Naive thymus-derived CD4-positive, alpha-beta T cell (primary cell): ENCODE measurements at regions of chr7 and their contacts with region 1.

Region 1: GRCh38 chr7:77247206-77247850 is 47.7 kb upstream of the FGL2 start:
- DNase-seq: peak; percentile 65 to 82 (median 79)
- ATAC-seq: peak; percentile 99
- H3K4me3 ChIP-seq: no peak overlapping the region
- H3K4me3 Mint-ChIP-seq: no peak overlapping the region
- H3K27ac ChIP-seq: no peak overlapping the region
- H3K27ac Mint-ChIP-seq: no peak overlapping the region
- H3K4me1 ChIP-seq: no peaks in the 10 kb centered on the region
- H3K4me1 Mint-ChIP-seq: peaks cover 0 to 12% (median 3%) of the 10 kb centered on the region in 7 donors
- H3K27me3 ChIP-seq: no peaks in the 10 kb centered on the region
- H3K27me3 Mint-ChIP-seq: peaks cover 0 to 16% (median 0%) of the 10 kb centered on the region in 5 donors

Region 2: DNA sequence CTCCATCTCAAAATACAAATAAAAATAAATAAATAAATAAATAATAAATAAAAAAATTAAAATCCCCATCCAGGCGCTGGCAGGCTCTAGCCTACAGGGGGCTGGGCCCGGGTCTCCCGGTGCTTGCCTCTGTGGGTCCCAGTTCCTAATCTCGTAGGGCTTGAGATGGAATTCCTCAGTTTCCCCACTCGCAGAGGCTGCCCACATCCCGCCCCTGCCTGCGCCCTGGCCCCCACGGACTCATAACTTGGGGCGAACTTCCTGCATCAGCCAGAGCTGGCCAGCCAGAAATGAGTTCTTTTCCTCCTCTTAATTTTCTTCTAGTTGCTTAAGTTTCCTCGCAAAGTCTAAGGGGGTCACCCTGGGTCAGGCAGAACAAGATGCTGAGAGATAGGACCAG is 1067.6 kb before region 1 on chr7:
- CTCF ChIA-PET with region 1: no interaction called
- POLR2A ChIA-PET with region 1: no interaction called
- intact Hi-C with region 1: loop called in 1 of 2 experiments (anchors 5 kb)
- DNase-seq: no peak
- ATAC-seq: no peak
- H3K4me3 ChIP-seq: no peak overlapping the region
- H3K4me3 Mint-ChIP-seq: no peak overlapping the region
- H3K27ac ChIP-seq: no peak overlapping the region
- H3K27ac Mint-ChIP-seq: no peak overlapping the region
- H3K4me1 ChIP-seq: no peaks in the 10 kb centered on the region
- H3K4me1 Mint-ChIP-seq: peaks cover 2 to 7% (median 4%) of the 10 kb centered on the region in 7 donors
- H3K27me3 ChIP-seq: no peaks in the 10 kb centered on the region
- H3K27me3 Mint-ChIP-seq: peaks cover 0 to 2% (median 0%) of the 10 kb centered on the region in 5 donors

Region 3: GRCh38 chr7:77199013-77199966 is 48.0 kb before region 1 on chr7 and contains the start of gene FGL2:
- CTCF ChIA-PET with region 1: interaction called, 9 read pairs
- POLR2A ChIA-PET with region 1: no interaction called
- intact Hi-C with region 1: loop called (anchors 1 to 2 kb)
- DNase-seq: peak in 6 of 9 donors; percentile 13 to 36 (median 33)
- ATAC-seq: peak; percentile 88
- H3K4me3 ChIP-seq: peak within 1 kb of the TSS; percentile 50
- H3K4me3 Mint-ChIP-seq: peak within 1 kb of the TSS; percentile 82 to 90 (median 84)
- H3K27ac ChIP-seq: peak within 1 kb of the TSS; percentile 58
- H3K27ac Mint-ChIP-seq: peak within 1 kb of the TSS; percentile 49 to 84 (median 81)
- H3K4me1 ChIP-seq: peaks cover 0 to 20% of the 10 kb centered on the region in 2 donors
- H3K4me1 Mint-ChIP-seq: peaks cover 18 to 49% (median 34%) of the 10 kb centered on the region in 7 donors
- H3K27me3 ChIP-seq: no peaks in the 10 kb centered on the region
- H3K27me3 Mint-ChIP-seq: no peaks in the 10 kb centered on the region
- total RNA-seq, gene FGL2: 2.8 to 129 (median 3.2) TPM

Region 4: DNA sequence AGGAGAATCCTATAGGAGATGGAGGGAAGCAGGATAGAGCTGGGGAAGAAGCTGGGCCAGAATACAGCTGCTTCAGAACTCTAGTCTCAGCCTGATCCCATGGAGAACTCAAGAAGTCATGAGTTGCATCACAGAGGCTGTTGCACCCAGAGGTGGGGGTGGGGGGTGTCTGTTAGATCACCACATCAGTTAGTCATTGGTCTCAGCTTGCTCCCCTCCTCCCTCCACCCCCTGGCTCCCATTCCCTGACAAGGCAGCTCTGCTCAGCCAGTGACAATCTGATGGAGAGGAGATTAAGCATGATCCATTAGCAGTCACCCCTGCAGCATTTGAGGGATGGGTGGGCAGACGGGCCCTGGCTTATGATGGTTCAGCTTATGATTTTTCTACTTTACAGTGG is 10.7 kb after region 1 on chr7:
- CTCF ChIA-PET with region 1: interaction called, 12 read pairs
- POLR2A ChIA-PET with region 1: interaction called, 4 read pairs
- intact Hi-C with region 1: no loop called
- DNase-seq: no peak
- ATAC-seq: no peak
- H3K4me3 ChIP-seq: no peak overlapping the region
- H3K4me3 Mint-ChIP-seq: no peak overlapping the region
- H3K27ac ChIP-seq: no peak overlapping the region
- H3K27ac Mint-ChIP-seq: no peak overlapping the region
- H3K4me1 ChIP-seq: no peaks in the 10 kb centered on the region
- H3K4me1 Mint-ChIP-seq: peaks cover 0 to 2% (median 0%) of the 10 kb centered on the region in 7 donors
- H3K27me3 ChIP-seq: no peaks in the 10 kb centered on the region
- H3K27me3 Mint-ChIP-seq: peaks cover 0 to 7% (median 0%) of the 10 kb centered on the region in 5 donors

Region 5: GRCh38 chr7:77331938-77332695 is 84.8 kb after region 1 on chr7:
- CTCF ChIA-PET with region 1: interaction called, 8 read pairs
- POLR2A ChIA-PET with region 1: no interaction called
- intact Hi-C with region 1: loop called (anchors 1 kb)
- DNase-seq: peak in 8 of 9 donors; percentile 15 to 49 (median 38)
- ATAC-seq: peak; percentile 78
- H3K4me3 ChIP-seq: no peak overlapping the region
- H3K4me3 Mint-ChIP-seq: peak overlapping the region in 2 of 10 donors; percentile 13 to 37
- H3K27ac ChIP-seq: no peak overlapping the region
- H3K27ac Mint-ChIP-seq: peak overlapping the region in 2 of 9 donors; percentile 55 to 74
- H3K4me1 ChIP-seq: peaks cover 18 to 34% of the 10 kb centered on the region in 2 donors
- H3K4me1 Mint-ChIP-seq: peaks cover 28 to 55% (median 42%) of the 10 kb centered on the region in 7 donors
- H3K27me3 ChIP-seq: no peaks in the 10 kb centered on the region
- H3K27me3 Mint-ChIP-seq: no peaks in the 10 kb centered on the region

Region 6: DNA sequence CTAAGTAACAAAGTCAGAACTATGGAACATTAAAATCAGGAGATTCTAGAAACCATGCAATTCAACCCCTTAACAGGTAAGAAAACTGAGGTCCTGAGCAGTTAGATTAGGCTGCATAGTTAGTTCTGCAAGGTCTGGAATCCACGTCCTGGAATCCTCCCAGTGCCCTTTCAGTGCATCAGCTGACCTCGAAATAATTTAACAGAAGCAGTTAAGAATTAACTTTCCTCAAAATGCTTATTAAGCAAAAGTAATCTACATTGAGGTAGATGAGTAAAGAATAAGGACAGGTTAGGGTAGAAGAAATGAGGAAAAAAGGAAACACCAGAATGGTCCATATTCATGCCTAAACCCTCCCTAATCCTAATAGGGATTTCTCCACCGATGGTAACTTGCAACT is 131.3 kb after region 1 on chr7:
- CTCF ChIA-PET with region 1: no interaction called
- POLR2A ChIA-PET with region 1: no interaction called
- intact Hi-C with region 1: no loop called
- DNase-seq: no peak
- ATAC-seq: no peak
- H3K4me3 ChIP-seq: no peak overlapping the region
- H3K4me3 Mint-ChIP-seq: no peak overlapping the region
- H3K27ac ChIP-seq: no peak overlapping the region
- H3K27ac Mint-ChIP-seq: no peak overlapping the region
- H3K4me1 ChIP-seq: no peaks in the 10 kb centered on the region
- H3K4me1 Mint-ChIP-seq: peaks cover 0 to 6% (median 0%) of the 10 kb centered on the region in 7 donors
- H3K27me3 ChIP-seq: no peaks in the 10 kb centered on the region
- H3K27me3 Mint-ChIP-seq: peaks cover 0 to 8% (median 0%) of the 10 kb centered on the region in 5 donors